ENCODE measurements at regions of chr19 and their contacts with region 1.

Region 1: DNA sequence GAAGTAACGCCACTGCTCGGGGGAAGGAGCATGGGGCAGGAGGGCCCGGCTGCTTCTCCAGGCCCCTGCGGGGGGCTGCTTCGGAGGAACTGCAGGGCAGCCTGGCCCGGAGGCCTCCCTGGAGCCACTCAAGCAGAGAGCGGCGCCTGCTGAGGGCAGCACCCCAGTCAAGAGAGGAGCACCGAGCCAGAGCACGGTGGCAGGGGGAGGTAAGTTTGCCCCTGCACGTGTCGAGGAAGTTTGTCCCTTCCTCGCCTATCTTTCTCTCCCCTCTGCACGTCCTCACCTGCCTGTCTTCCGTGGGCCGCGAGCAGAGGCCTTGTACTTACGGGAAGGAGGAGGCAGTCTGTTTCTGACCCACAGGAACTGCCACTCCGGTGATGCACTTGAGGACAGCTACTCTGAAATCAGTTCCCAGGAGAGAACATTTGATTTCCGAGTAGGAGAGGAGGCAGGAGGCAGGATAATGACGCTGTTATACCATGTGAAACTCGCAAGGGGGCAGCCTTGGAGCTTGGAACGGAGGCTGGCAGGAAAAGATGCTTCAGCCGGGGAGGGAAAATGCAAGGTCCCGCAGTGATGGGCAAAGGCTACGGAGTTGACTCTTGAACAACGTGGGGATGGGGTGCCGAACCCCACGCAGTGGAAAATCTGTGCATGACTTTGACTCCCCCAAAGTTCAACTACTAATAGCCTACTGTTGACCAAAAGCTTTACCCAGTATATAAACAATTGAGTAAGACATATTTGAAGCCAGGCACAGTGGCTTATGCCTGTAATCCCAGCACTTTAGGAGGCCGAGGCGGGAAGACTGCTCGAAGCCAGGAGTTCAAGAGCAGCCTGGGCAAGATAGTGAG is 5.0 kb downstream of the FFAR1 start:
- DNase-seq: peak; percentile 9
- H3K4me3 ChIP-seq: no peak overlapping the region
- CTCF ChIP-seq: peak; percentile 81

Region 2: GRCh38 chr19:35365303-35365702 is 12.6 kb after region 1 on chr19:
- CTCF ChIA-PET with region 1: interaction called, 17 read pairs
- POLR2A ChIA-PET with region 1: no interaction called
- DNase-seq: no peak
- H3K4me3 ChIP-seq: no peak overlapping the region
- CTCF ChIP-seq: no peak

Region 3: DNA sequence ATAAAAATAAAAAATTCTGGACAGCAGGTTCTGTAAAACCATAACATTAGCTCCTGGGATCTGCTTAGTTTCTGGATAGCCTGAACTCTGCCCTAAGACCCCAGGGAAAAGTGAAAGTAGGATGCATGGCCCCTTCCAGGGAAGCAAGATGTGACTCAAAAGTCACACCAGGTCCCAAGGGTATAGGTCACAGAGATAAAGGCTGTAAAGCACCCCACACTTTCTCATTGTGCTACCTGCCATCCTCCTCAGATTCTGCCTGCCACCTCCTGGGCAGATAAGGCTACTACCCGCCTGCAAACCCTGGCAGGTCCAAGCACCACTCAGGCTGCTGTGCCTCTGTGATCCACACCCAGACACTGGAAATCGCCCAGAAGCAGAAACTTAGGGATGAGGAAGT is 116.0 kb after region 1 on chr19:
- CTCF ChIA-PET with region 1: interaction called, 20 read pairs
- POLR2A ChIA-PET with region 1: no interaction called
- DNase-seq: peak; percentile 2
- H3K4me3 ChIP-seq: no peak overlapping the region
- CTCF ChIP-seq: peak; percentile 21

Region 4: GRCh38 chr19:35495107-35496064 is 142.7 kb after region 1 on chr19:
- CTCF ChIA-PET with region 1: interaction called, 93 read pairs
- POLR2A ChIA-PET with region 1: no interaction called
- DNase-seq: no peak
- H3K4me3 ChIP-seq: no peak overlapping the region
- CTCF ChIP-seq: peak; percentile 99